IMR-90 (cell line): ENCODE measurements at regions of chr10 and their contacts with region 1.

Region 1: DNA sequence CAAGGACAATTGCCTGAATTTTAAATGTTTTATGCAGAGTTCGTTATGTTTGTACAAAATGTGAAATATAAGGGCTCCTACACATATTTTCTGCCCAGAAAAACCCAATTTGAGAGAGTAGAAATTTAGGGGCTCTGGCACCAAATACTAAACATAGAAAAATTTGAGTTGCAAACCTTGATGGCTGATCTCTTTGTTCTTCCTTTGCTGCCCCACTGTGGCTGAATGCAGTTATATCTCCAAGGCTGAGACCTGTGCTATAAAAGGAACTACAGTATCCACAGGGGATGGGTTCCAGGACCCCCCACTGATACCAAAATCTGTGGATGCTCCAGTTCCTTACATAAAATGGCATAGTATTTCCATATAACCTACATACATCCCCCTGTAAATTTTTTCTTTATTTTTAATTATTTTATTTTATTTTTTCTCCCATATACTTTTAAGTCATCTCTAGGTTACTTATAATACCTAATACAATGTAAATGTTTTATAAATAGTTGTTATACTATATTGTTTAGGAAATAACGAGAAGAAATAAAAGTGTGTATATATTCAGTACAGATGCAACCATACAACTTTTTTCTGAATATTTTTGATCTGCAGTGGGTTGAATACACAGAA is 22.5 kb downstream of the CFAP43 start:
- DNase-seq: peak; percentile 39
- ATAC-seq: peak; percentile 79
- H3K4me3 ChIP-seq: no peak overlapping the region
- H3K27ac ChIP-seq: no peak overlapping the region
- H3K4me1 ChIP-seq: no peaks in the 10 kb centered on the region
- H3K27me3 ChIP-seq: peaks cover 29% of the 10 kb centered on the region
- CTCF ChIP-seq: peak; percentile 64
- POLR2A ChIP-seq: no peak
- RAD21 ChIP-seq: peak; percentile 68

Region 2: DNA sequence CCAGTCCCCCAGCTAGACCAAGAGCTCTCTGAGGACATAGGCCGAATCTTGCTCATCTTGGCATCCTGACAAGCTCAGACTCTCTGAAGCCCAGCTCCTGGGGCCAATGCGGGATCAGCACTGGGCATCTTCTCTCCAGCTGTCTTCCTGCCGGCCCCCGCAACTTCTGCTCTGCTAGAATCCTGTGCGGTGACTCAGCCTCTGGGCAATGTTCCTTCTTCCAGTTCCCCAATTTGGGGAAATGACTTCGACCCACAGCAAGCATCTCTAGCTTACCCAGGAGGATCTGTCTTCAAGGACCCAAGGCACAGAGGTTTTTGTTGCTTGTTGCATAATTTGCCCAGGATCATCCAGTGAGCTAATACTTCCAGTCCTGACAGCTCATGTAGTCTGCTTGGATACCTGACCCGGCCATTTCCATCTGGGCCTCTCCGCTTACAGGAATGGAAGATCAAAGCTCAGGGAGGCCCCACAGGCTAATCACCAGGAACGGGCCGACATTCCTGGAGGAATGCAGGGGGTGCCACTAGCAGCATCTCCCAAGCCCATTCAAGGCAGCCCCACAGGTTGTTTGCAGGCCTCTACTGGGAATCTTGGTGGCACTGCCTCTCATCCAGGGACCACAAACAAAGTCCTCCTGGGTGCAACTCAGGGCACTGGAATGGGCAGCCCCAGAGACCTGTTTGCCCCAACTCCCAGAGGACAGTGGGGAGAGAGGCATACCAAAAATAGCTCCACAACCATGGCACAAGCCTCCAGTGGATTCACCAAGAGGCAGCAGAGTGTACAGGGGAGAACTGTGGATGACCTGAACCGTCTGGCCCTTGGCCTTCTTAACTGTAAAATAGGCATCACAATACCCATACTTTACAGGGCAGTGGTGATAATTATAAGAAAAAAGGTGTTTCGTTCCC is 564.3 kb before region 1 on chr10:
- CTCF ChIA-PET with region 1: no interaction called
- POLR2A ChIA-PET with region 1: no interaction called
- dilution Hi-C with region 1: no loop called
- in situ Hi-C with region 1: no loop called
- intact Hi-C with region 1: no loop called
- DNase-seq: peak; percentile 99
- ATAC-seq: peak; percentile 86
- H3K4me3 ChIP-seq: no peak overlapping the region
- H3K27ac ChIP-seq: peak overlapping the region; percentile 59
- H3K4me1 ChIP-seq: peaks cover 33% of the 10 kb centered on the region
- H3K27me3 ChIP-seq: no peaks in the 10 kb centered on the region
- CTCF ChIP-seq: no peak
- POLR2A ChIP-seq: peak; percentile 55; the same call in 1 of the 2 replicates
- RAD21 ChIP-seq: no peak

Region 3: GRCh38 chr10:104353325-104354048 is 143.8 kb after region 1 on chr10 and contains the start of gene CFAP58:
- CTCF ChIA-PET with region 1: no interaction called
- POLR2A ChIA-PET with region 1: no interaction called
- dilution Hi-C with region 1: no loop called
- in situ Hi-C with region 1: no loop called
- intact Hi-C with region 1: loop called (anchors 1 kb)
- DNase-seq: peak; percentile 70
- ATAC-seq: peak; percentile 87
- H3K4me3 ChIP-seq: peak within 1 kb of the TSS; percentile 53
- H3K27ac ChIP-seq: no peak within 1 kb of the TSS; the same call in 1 of the 2 replicates
- H3K4me1 ChIP-seq: peaks cover 7% of the 10 kb centered on the region; the same call in 1 of the 2 replicates
- H3K27me3 ChIP-seq: peaks cover 3% of the 10 kb centered on the region; the same call in 1 of the 2 replicates
- CTCF ChIP-seq: peak; percentile 67
- POLR2A ChIP-seq: no peak
- RAD21 ChIP-seq: no peak
- total RNA-seq, gene CFAP58: 0.36 and 0.83 TPM in 2 replicates